Ovary (tissue), 10 donors: ENCODE measurements at regions of chr12 and their contacts with region 1.

Region 1: GRCh38 chr12:49707128-49707811 is at the start of gene FMNL3:
- DNase-seq: peak; percentile 99 to 100 (median 99)
- H3K4me3 ChIP-seq: peak within 1 kb of the TSS; percentile 97
- H3K27ac ChIP-seq: peak within 1 kb of the TSS; percentile 82 to 97
- H3K4me1 ChIP-seq: peaks cover 14% of the 10 kb centered on the region
- H3K27me3 ChIP-seq: no peaks in the 10 kb centered on the region
- CTCF ChIP-seq: peak; percentile 94 to 100 (median 100)
- EP300 ChIP-seq: no peak
- POLR2A ChIP-seq: peak; percentile 65
- total RNA-seq, gene FMNL3: 15.7 to 58.1 (median 40.0) TPM

Region 2: DNA sequence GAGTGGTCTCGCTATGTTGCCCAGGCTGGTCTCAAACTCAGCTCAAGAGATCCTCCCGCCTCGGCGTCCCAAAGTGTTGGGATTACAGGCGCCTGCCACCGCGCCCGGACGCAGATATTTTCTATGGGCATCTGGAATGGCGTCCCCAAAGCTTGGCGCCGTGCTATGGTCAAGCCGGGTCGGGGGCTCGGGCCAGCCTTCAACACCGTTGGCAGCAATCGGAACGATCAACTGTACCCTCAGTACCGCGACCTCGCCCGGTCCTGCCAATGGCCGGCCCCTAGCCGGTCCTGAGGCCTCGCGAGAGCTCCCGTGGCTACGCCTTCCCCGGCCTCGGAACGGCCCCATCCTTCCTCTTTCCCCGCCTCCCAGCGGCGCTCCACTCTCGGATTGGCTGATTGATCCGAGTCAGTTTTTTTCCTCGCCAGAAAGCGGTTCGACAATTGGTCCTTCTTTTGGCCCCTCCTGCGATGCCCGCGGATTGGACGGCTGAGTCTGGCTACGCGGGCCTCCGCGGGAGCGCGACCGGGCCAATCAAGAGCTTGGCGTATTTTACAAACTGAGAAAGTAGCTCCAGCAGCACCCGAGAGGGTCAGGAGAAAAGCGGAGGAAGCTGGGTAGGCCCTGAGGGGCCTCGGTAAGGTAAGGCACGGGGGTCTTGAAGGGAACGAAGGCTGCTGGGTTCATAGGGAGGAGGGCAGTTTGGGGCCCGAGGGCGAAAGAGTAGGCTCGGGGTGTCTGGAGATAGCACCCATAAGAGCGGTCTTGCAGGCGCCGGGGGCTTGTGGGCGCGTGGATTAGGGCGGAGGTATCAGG is 384.4 kb before region 1 on chr12 and contains the start of gene TROAP:
- intact Hi-C with region 1: no loop called
- DNase-seq: peak; percentile 96 to 97 (median 96)
- H3K4me3 ChIP-seq: peak within 1 kb of the TSS; percentile 57
- H3K27ac ChIP-seq: no peak within 1 kb of the TSS
- H3K4me1 ChIP-seq: peaks cover 4% of the 10 kb centered on the region
- H3K27me3 ChIP-seq: no peaks in the 10 kb centered on the region
- CTCF ChIP-seq: no peak
- EP300 ChIP-seq: no peak
- POLR2A ChIP-seq: no peak
- total RNA-seq, gene TROAP: 0.36 to 1.6 (median 0.89) TPM in 6 of 7 donors, not detected in the other

Region 3: GRCh38 chr12:49548822-49549648 is 158.2 kb before region 1 on chr12:
- intact Hi-C with region 1: no loop called
- DNase-seq: peak in 1 of 5 donors; percentile 63
- H3K4me3 ChIP-seq: peak overlapping the region; percentile 28
- H3K27ac ChIP-seq: no peak overlapping the region
- H3K4me1 ChIP-seq: peaks cover 9% of the 10 kb centered on the region
- H3K27me3 ChIP-seq: no peaks in the 10 kb centered on the region
- CTCF ChIP-seq: peak in 1 of 3 donors; percentile 41
- EP300 ChIP-seq: no peak
- POLR2A ChIP-seq: no peak

Region 4: GRCh38 chr12:49644620-49644994 is 62.7 kb before region 1 on chr12:
- intact Hi-C with region 1: loop called (anchors 1 to 2 kb)
- DNase-seq: peak; percentile 83 to 90 (median 88)
- H3K4me3 ChIP-seq: no peak overlapping the region
- H3K27ac ChIP-seq: peak overlapping the region; percentile 1 to 49
- H3K4me1 ChIP-seq: no peaks in the 10 kb centered on the region
- H3K27me3 ChIP-seq: no peaks in the 10 kb centered on the region
- CTCF ChIP-seq: peak; percentile 90 to 97 (median 95)
- EP300 ChIP-seq: no peak
- POLR2A ChIP-seq: no peak

Region 5: GRCh38 chr12:49673446-49674317 is 33.6 kb before region 1 on chr12:
- intact Hi-C with region 1: loop called in 3 of 4 experiments (anchors 1 to 5 kb)
- DNase-seq: peak; percentile 93 to 97 (median 95)
- H3K4me3 ChIP-seq: no peak overlapping the region
- H3K27ac ChIP-seq: peak overlapping the region; percentile 91 to 97
- H3K4me1 ChIP-seq: peaks cover 50% of the 10 kb centered on the region
- H3K27me3 ChIP-seq: no peaks in the 10 kb centered on the region
- CTCF ChIP-seq: peak; percentile 53 to 90 (median 86)
- EP300 ChIP-seq: no peak
- POLR2A ChIP-seq: peak; percentile 73

Region 6: DNA sequence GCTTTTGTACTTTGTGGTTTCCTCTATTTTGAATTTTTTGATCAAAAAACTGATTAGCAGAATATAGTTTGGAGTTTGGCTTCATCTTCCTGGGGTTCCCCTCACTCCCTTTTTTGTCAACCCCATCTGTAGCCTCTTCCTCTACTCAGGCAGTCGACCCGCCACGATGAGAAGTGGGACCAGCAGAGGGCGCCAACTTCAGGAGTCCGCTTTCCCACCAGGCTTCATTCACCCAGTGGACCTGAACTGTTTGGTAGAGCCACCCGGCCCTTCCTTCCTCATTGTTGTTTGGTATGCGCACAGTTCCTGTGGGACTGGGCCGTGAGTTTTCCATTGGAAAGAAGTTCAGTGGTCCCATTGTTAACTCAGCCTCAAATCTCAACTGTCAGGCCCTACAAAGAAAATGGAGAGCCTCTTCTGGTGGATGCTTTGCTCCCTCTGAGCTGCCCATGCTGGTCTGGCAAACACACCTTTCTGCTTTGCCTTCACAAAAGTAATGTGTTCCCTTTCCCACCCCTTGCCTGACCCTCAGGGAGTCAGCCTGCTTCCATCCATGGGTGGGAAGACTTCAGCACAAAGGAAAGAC is 55.8 kb after region 1 on chr12:
- intact Hi-C with region 1: no loop called
- DNase-seq: peak; percentile 39 to 75 (median 65)
- H3K4me3 ChIP-seq: no peak overlapping the region
- H3K27ac ChIP-seq: no peak overlapping the region
- H3K4me1 ChIP-seq: no peaks in the 10 kb centered on the region
- H3K27me3 ChIP-seq: no peaks in the 10 kb centered on the region
- CTCF ChIP-seq: peak in 2 of 3 donors; percentile 12 to 35
- EP300 ChIP-seq: no peak
- POLR2A ChIP-seq: no peak